ENCODE measurements at regions of chr10 and their contacts with region 1.

Region 1: GRCh38 chr10:132536971-132537712 is 445 bp upstream of the INPP5A start:
- DNase-seq: peak; percentile 100
- H3K4me3 ChIP-seq: peak overlapping the region; percentile 81 to 87
- H3K27ac ChIP-seq: peak overlapping the region; percentile 85 to 87
- H3K4me1 ChIP-seq: peaks cover 5 to 41% of the 10 kb centered on the region in 2 donors
- H3K27me3 ChIP-seq: no peaks in the 10 kb centered on the region
- CTCF ChIP-seq: peak in 2 of 3 experiments; percentile 17 to 67

Region 2: DNA sequence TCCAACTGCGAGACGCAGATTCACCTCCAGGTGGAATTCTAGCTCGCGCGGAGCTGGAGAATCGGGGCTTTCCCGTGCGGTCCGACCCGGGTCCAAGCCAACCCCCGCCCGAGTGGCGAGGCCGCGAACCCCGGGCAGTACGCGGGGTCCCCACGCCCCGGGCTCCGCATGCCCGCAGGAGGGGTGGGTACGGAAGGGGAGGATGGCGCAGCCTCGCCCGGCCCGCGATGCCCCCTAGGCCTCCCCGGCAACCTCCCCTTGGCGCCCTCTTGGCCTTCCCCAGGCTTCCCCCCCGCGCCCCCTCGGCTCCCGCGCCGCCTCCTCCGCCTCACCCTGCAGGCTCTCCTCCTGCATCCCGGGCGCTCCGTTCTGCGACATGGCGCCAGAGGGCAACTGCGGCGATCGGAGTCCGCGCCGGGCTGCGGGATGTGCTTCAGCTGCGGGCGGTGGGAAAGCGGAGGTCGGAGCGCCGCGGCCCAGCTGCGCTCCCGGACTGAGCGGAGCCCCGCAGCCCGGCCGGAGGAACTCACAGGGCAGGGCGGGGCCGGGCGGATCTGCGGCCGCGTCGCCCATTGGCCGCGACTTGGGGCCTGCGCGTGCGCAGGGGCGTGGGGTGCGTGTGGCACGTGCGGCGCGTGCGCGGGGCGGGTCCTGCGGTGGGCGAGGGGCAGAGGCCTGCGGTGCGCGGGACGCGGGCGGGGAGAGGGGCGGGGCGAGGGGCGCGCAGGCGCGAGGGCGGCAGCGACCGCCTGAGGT is 555.5 kb before region 1 on chr10 and contains the start of gene BNIP3:
- intact Hi-C with region 1: loop called (anchors 5 kb)
- DNase-seq: peak; percentile 82 to 96
- H3K4me3 ChIP-seq: peak within 1 kb of the TSS; percentile 92 to 99
- H3K27ac ChIP-seq: peak within 1 kb of the TSS; percentile 48 to 67
- H3K4me1 ChIP-seq: peaks cover 6 to 11% of the 10 kb centered on the region in 2 donors
- H3K27me3 ChIP-seq: no peaks in the 10 kb centered on the region
- CTCF ChIP-seq: peak in 2 of 3 experiments; percentile 6 to 9
- total RNA-seq, gene BNIP3: 18.3 TPM

Region 3: GRCh38 chr10:132396495-132397035 is 140.6 kb before region 1 on chr10:
- intact Hi-C with region 1: loop called (anchors 5 kb)
- DNase-seq: peak in 1 of 2 donors; percentile 81
- H3K4me3 ChIP-seq: peak overlapping the region; percentile 74 to 90
- H3K27ac ChIP-seq: peak overlapping the region; percentile 91 to 95
- H3K4me1 ChIP-seq: peaks cover 3 to 26% of the 10 kb centered on the region in 2 donors
- H3K27me3 ChIP-seq: no peaks in the 10 kb centered on the region
- CTCF ChIP-seq: peak; percentile 13 to 53 (median 32)

Region 4: DNA sequence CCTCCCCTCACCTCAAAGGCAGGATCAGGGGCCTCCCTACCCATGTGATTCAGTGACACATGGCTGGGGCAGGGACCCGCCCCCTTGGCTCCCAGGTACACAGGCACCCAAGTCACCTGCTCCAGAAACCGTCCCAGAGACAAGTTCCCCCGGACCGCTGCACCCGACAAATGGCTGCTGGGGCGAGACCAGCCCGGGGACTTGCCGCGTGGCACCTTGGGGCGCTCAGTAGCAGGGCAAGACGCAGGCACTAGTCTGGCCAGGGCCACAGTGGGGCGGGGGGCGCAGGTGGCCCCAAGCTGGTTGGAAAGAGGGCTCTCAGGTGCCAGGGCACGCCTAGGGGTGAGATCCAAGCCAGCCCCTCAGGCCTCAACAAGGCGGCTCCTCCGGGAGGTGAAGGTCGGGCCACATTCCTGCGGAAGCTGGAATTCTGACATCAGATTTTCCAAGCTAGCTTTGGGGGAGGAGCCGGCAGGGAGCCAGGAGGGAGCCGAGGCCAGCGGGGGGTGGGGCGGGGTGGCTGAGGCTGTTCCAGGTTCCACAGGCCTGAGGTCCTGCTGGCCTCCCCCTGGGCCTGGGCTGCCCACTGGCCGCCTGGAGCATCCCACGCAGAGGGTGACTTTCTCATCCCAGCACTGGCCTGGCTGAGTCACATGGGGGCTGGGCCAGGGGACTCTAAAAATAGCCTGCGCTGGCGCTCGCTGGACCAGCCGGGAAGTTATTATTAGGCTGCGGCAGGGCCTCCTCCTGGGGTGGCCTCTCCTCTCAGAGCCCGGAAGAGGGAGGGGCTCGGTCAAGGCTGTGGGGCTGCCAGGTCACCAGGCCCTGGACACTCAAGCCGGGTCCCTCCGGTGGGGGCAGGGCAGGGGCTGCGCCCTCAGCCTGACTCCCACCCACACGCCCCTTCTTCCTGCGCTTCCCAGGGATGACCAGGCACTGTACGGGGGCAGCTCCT is 20.1 kb before region 1 on chr10:
- intact Hi-C with region 1: loop called (anchors 1 kb)
- DNase-seq: peak; percentile 87 to 98
- H3K4me3 ChIP-seq: peak overlapping the region; percentile 37 to 45
- H3K27ac ChIP-seq: peak overlapping the region; percentile 97
- H3K4me1 ChIP-seq: peaks cover 24 to 58% of the 10 kb centered on the region in 2 donors
- H3K27me3 ChIP-seq: no peaks in the 10 kb centered on the region
- CTCF ChIP-seq: no peak

Region 5: DNA sequence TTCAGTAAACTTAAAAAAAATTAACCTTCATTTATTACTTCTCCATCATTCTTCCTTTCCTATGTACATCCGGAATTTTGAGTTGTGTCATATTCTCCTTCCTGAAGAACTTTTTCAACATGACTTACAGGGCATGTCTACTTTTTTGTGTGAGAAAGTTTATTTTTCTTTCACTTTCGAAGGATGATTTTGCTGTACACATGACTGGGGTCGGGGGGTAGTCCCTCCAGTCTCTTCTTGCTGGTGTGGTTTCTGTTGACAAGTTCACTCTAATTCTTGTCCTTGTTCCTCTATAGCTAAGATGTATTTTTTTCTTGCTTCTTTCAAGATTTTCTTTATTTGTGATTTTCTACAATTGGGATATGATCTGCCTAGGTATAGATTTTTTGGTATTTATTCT is 56.2 kb after region 1 on chr10:
- intact Hi-C with region 1: loop called (anchors 1 kb)
- DNase-seq: no peak
- H3K4me3 ChIP-seq: no peak overlapping the region
- H3K27ac ChIP-seq: peak overlapping the region; percentile 81 to 86
- H3K4me1 ChIP-seq: peaks cover 28 to 53% of the 10 kb centered on the region in 2 donors
- H3K27me3 ChIP-seq: no peaks in the 10 kb centered on the region
- CTCF ChIP-seq: no peak

Region 6: DNA sequence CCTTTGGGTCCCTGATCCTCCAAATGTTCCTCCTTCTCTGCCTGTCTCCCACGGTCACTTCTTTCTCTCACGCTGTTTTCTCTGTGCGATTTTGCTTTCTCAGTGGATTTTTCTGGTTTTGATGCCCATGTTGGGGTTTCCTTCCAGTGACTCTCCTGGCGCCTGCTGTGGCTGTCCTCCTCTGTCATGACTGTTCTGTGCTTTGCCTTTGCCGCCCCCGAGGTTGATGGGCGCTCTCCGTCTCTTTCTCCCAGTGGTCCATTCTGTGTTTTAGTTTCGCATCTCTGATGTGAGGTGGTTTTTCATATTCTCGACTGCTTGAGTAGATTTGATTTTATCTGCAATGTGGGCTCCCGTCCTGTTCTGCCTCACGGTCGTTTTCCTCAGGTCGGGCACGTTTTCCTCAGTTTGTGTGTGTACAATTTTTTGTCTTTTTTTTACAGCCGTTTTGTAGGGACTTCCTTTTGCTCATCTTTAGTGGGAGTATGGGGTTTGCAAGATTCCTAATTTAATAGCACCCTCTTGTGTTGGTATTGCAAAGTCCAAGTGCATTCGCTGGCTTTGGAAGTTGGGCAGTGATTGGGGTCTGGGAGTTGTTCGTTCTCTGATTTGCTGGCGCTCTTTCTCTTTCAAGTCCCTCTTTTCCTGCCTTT is 100.5 kb after region 1 on chr10:
- intact Hi-C with region 1: loop called (anchors 1 kb)
- DNase-seq: peak in 1 of 2 donors; percentile 62
- H3K4me3 ChIP-seq: no peak overlapping the region
- H3K27ac ChIP-seq: peak overlapping the region; percentile 45 to 50
- H3K4me1 ChIP-seq: peaks cover 15 to 38% of the 10 kb centered on the region in 2 donors
- H3K27me3 ChIP-seq: no peaks in the 10 kb centered on the region
- CTCF ChIP-seq: peak; percentile 62 to 81 (median 68)

Measured in ascending aorta (tissue), 2 donors.